CD4-positive, alpha-beta T cell (primary cell): ENCODE measurements at regions of chr9 and their contacts with region 1.

Region 1: DNA sequence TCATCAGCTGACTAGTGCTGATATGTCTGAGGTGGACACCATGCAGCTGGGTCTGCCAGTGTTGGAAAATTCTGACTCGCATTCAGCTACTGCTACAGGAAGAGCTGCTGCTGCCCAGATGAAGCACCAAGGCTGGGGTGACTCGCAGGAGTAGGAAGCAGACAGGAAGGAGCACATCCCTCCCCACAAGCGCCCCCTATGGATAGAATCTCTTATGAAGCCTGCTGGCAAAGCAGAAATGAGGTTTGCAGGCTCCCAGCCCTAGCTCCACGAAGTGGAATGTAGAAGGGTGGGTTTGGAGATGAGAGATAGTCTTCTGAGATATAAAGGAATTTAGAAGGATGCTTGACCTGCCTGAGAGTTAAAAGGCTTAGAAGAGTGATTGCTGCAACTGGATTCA is 443.0 kb downstream of the ACTL7B start:
- DNase-seq: no peak
- ATAC-seq: no peak
- H3K4me3 ChIP-seq: no peak overlapping the region
- H3K4me3 Mint-ChIP-seq: no peak overlapping the region
- H3K27ac ChIP-seq: no peak overlapping the region
- H3K27ac Mint-ChIP-seq: no peak overlapping the region
- H3K4me1 ChIP-seq: no peaks in the 10 kb centered on the region
- H3K4me1 Mint-ChIP-seq: no peaks in the 10 kb centered on the region
- H3K27me3 ChIP-seq: no peaks in the 10 kb centered on the region
- H3K27me3 Mint-ChIP-seq: peaks cover 5% of the 10 kb centered on the region
- CTCF ChIP-seq: no peak

Region 2: GRCh38 chr9:108225149-108225800 is 187.5 kb before region 1 on chr9:
- CTCF ChIA-PET with region 1: no interaction called
- POLR2A ChIA-PET with region 1: no interaction called
- intact Hi-C with region 1: no loop called
- DNase-seq: no peak
- ATAC-seq: no peak
- H3K4me3 ChIP-seq: no peak overlapping the region
- H3K4me3 Mint-ChIP-seq: no peak overlapping the region
- H3K27ac ChIP-seq: no peak overlapping the region
- H3K27ac Mint-ChIP-seq: no peak overlapping the region
- H3K4me1 ChIP-seq: no peaks in the 10 kb centered on the region
- H3K4me1 Mint-ChIP-seq: no peaks in the 10 kb centered on the region
- H3K27me3 ChIP-seq: peaks cover 0 to 4% of the 10 kb centered on the region in 2 experiments
- H3K27me3 Mint-ChIP-seq: no peaks in the 10 kb centered on the region
- CTCF ChIP-seq: no peak

Region 3: DNA sequence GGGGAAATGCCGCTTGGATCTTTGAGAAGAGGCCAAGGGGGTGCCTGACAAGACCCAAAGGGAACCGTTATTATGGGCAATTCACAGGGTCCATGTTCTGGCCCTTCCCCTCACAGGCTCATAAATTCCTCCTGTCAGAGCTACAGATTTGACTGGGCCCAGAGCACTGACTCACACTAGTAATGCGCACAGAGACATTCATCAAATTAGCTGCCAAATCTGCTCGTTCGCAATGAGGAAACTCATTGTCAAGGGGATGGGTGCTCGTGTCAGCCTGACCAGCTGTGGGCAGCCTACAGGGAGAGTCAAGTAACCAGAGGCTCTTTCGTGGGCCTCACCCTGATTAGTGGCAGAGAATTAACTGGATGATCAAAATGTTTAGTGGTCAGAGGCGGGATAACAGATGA is 65.7 kb after region 1 on chr9:
- CTCF ChIA-PET with region 1: no interaction called
- POLR2A ChIA-PET with region 1: no interaction called
- intact Hi-C with region 1: loop called in 1 of 2 experiments (anchors 10 kb)
- DNase-seq: no peak
- ATAC-seq: no peak
- H3K4me3 ChIP-seq: no peak overlapping the region
- H3K4me3 Mint-ChIP-seq: no peak overlapping the region
- H3K27ac ChIP-seq: no peak overlapping the region
- H3K27ac Mint-ChIP-seq: no peak overlapping the region
- H3K4me1 ChIP-seq: no peaks in the 10 kb centered on the region
- H3K4me1 Mint-ChIP-seq: no peaks in the 10 kb centered on the region
- H3K27me3 ChIP-seq: no peaks in the 10 kb centered on the region
- H3K27me3 Mint-ChIP-seq: peaks cover 3% of the 10 kb centered on the region
- CTCF ChIP-seq: no peak

Region 4: DNA sequence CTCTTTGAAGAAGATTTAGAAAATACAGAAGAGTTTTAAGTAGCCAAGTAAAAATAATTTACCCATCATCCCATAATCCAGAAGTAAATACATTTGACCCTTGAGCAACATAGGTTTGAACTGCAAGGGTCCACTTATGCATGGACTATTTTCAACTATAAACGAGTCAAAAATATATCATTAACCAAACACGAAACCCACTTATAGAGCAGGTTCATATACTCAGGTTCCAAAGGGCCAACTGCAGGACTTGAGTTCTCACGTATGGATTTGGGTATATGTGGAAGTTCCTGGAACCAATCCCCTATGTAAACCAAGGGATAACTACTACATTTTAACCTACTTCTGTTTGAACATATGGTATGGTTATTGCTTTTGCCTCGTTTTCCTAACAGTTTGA is 527.2 kb after region 1 on chr9:
- CTCF ChIA-PET with region 1: no interaction called
- POLR2A ChIA-PET with region 1: no interaction called
- intact Hi-C with region 1: no loop called
- DNase-seq: no peak
- ATAC-seq: no peak
- H3K4me3 ChIP-seq: no peak overlapping the region
- H3K4me3 Mint-ChIP-seq: no peak overlapping the region
- H3K27ac ChIP-seq: no peak overlapping the region
- H3K27ac Mint-ChIP-seq: no peak overlapping the region
- H3K4me1 ChIP-seq: peaks cover 3% of the 10 kb centered on the region
- H3K4me1 Mint-ChIP-seq: peaks cover 13% of the 10 kb centered on the region
- H3K27me3 ChIP-seq: no peaks in the 10 kb centered on the region
- H3K27me3 Mint-ChIP-seq: no peaks in the 10 kb centered on the region
- CTCF ChIP-seq: no peak